CD4-positive, alpha-beta T cell (primary cell): ENCODE measurements at regions of chr1 and their contacts with region 1.

Region 1: DNA sequence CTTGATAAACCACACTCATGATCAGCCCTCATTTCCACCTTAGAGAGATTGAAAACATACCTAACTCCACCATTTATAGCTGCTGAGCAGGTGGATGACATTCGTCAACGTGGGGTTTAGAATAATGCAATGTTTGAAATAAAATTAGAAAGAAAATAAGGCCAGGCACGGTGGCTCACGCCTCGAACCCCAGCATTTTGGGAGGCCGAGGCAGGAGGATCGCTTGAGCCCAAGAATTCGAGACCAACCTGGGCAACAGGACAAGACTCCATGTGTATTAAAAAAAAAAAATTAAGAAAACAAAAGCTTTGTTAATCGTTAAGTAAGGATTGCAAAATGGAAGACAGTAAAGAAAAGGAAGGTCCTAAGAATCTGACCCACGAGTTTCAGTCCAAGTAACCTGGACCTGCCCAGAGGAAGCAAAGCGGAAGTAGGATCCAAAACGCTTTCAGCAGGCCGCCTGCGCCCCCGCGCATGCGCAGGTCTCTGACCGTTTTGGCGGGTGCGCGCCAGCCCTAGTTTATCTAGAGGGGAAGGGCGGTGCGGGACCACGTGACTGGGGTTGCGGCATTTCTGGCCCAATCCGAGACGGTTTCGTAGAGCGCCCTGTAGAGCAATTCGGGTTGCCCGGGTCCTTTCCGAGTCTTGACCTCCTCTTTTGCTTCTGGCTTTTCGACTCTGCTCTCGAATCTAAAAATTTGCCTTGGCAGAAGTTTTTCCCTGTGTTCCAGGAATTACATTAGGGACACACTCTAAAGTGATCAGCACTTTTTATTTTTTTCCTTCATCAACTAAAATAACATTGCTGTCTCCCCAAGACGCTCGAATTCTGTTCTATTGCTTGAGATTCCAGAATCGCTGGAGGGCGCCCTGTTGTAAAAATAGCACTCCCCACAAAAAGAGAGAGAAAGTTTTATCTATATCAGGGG is 22.5 kb downstream of the ANP32E start:
- DNase-seq: peak; percentile 79 to 96 (median 88)
- ATAC-seq: peak; percentile 98
- H3K4me3 ChIP-seq: peak overlapping the region; percentile 63
- H3K4me3 Mint-ChIP-seq: peak overlapping the region; percentile 89
- H3K27ac ChIP-seq: peak overlapping the region; percentile 71 to 74
- H3K27ac Mint-ChIP-seq: peak overlapping the region; percentile 96
- H3K4me1 ChIP-seq: peaks cover 16% of the 10 kb centered on the region
- H3K4me1 Mint-ChIP-seq: peaks cover 18% of the 10 kb centered on the region
- H3K27me3 ChIP-seq: no peaks in the 10 kb centered on the region
- H3K27me3 Mint-ChIP-seq: no peaks in the 10 kb centered on the region
- CTCF ChIP-seq: peak; percentile 66

Region 2: GRCh38 chr1:150235852-150236613 is 22.6 kb after region 1 on chr1 and contains the start of gene ANP32E:
- CTCF ChIA-PET with region 1: no interaction called
- POLR2A ChIA-PET with region 1: interaction called, 15 read pairs
- intact Hi-C with region 1: loop called (anchors 1 to 2 kb)
- DNase-seq: peak; percentile 89 to 99 (median 91)
- ATAC-seq: peak; percentile 89
- H3K4me3 ChIP-seq: peak within 1 kb of the TSS; percentile 85
- H3K4me3 Mint-ChIP-seq: no peak within 1 kb of the TSS
- H3K27ac ChIP-seq: peak within 1 kb of the TSS; percentile 96 to 99
- H3K27ac Mint-ChIP-seq: no peak within 1 kb of the TSS
- H3K4me1 ChIP-seq: peaks cover 25% of the 10 kb centered on the region
- H3K4me1 Mint-ChIP-seq: peaks cover 16% of the 10 kb centered on the region
- H3K27me3 ChIP-seq: no peaks in the 10 kb centered on the region
- H3K27me3 Mint-ChIP-seq: no peaks in the 10 kb centered on the region
- CTCF ChIP-seq: no peak
- total RNA-seq, gene ANP32E: 31.9 to 32.9 TPM

Region 3: GRCh38 chr1:150321826-150322166 is 108.4 kb after region 1 on chr1:
- CTCF ChIA-PET with region 1: no interaction called
- POLR2A ChIA-PET with region 1: no interaction called
- intact Hi-C with region 1: loop called in 1 of 2 experiments (anchors 5 kb)
- DNase-seq: peak in 5 of 14 experiments; percentile 3 to 38 (median 28)
- ATAC-seq: peak; percentile 20
- H3K4me3 ChIP-seq: peak overlapping the region; percentile 78
- H3K4me3 Mint-ChIP-seq: peak overlapping the region; percentile 97
- H3K27ac ChIP-seq: peak overlapping the region; percentile 83 to 84
- H3K27ac Mint-ChIP-seq: peak overlapping the region; percentile 95
- H3K4me1 ChIP-seq: peaks cover 34% of the 10 kb centered on the region
- H3K4me1 Mint-ChIP-seq: peaks cover 39% of the 10 kb centered on the region
- H3K27me3 ChIP-seq: no peaks in the 10 kb centered on the region
- H3K27me3 Mint-ChIP-seq: no peaks in the 10 kb centered on the region
- CTCF ChIP-seq: no peak